Activated CD8-positive, alpha-beta T cell treated with anti-CD3 and anti-CD28 coated beads, Interleukin-2, amount 10 ng/mL, durations not matched to agents 7 days and 5 days (primary cell): ENCODE measurements at regions of chr5 and their contacts with region 1.

Region 1: GRCh38 chr5:61055434-61056006 is 106.7 kb downstream of the SMIM15 start:
- DNase-seq: peak; percentile 22
- ATAC-seq: no peak
- H3K4me3 Mint-ChIP-seq: no peak overlapping the region
- H3K27ac Mint-ChIP-seq: no peak overlapping the region
- H3K4me1 Mint-ChIP-seq: no peaks in the 10 kb centered on the region
- H3K27me3 Mint-ChIP-seq: no peaks in the 10 kb centered on the region

Region 2: DNA sequence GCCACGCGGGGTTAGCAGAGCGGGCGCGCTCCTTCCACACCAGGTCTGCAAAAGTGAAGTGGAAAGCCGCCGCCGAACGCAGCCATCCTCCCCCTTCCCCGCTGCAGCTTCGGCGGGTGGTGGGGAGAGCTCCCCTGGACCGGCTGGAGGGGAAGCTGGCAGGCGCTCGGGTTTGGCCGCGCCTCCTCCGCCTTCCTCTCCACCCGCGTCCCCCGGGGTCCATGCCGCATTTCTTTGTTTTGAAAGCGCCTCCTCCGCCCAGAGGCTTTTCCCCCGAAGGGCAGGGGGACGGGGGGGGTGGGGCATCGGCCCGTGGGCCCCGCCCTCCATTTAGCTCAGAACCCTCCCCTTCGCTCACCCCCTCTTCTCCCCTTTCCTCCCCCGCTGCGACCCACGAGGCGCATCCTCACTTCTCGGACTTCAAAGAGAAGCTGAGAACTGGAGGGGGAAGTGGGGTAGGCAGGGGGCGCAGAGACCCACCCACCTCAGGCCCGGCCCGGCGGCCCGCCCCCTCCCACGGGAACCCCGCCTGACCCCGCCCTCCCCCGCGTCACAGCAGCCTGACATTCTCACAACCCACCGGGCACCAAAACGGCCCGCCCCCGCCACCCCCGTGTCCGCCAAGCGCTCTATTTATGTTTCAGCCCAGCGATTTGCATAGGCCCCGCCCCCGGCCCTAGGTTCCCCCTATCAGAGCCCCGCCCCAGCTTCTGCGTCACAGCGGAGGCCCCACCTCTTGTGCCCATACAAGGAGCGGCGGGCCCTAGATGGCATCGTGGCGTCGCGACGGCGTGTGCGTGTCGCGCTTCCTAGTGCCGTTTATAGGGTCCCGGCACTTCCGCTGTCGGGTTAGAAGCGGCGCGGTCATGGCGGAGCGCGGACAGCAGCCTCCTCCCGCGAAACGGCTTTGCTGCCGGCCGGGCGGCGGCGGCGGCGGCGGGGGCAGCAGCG is 276.2 kb after region 1 on chr5 and contains the start of gene ZSWIM6:
- CTCF ChIA-PET with region 1: interaction called, 10 read pairs
- POLR2A ChIA-PET with region 1: no interaction called
- DNase-seq: peak; percentile 99
- ATAC-seq: peak; percentile 82
- H3K4me3 Mint-ChIP-seq: peak within 1 kb of the TSS; percentile 87
- H3K27ac Mint-ChIP-seq: peak within 1 kb of the TSS; percentile 94
- H3K4me1 Mint-ChIP-seq: peaks cover 44% of the 10 kb centered on the region
- H3K27me3 Mint-ChIP-seq: peaks cover 40% of the 10 kb centered on the region
- total RNA-seq, gene ZSWIM6: 2.5 to 2.6 TPM

Region 3: DNA sequence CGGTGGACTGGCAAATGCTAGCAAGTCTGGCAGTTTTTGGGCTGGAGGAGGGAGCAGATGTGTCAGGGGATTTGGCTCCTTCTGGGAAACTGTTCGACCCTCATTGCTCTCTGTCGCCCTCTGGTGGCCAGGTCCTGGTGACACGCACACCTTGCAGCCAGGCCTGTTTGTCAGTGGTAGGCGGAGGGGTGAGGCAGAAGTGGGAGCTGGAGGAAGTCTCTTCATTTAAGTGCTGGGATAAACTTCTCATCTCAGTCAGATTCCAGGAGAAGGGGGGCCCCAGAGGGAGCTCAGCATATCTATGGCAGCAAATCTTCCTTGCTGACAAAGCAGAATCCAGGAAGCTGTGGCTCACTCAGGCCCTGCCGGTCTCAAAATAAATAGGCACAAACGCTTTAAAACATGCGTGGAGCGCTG is 603.1 kb after region 1 on chr5:
- CTCF ChIA-PET with region 1: interaction called, 27 read pairs
- POLR2A ChIA-PET with region 1: no interaction called
- DNase-seq: peak; percentile 81
- ATAC-seq: peak; percentile 90
- H3K4me3 Mint-ChIP-seq: no peak overlapping the region
- H3K27ac Mint-ChIP-seq: no peak overlapping the region
- H3K4me1 Mint-ChIP-seq: no peaks in the 10 kb centered on the region
- H3K27me3 Mint-ChIP-seq: peaks cover 5% of the 10 kb centered on the region